ENCODE measurements at regions of chr6 and their contacts with region 1.

Region 1: GRCh38 chr6:157981395-157982296 is at the start of gene SYNJ2:
- DNase-seq: peak; percentile 72
- H3K4me3 Mint-ChIP-seq: peak within 1 kb of the TSS; percentile 72
- H3K27ac Mint-ChIP-seq: peak within 1 kb of the TSS; percentile 11
- H3K4me1 Mint-ChIP-seq: no peaks in the 10 kb centered on the region
- H3K27me3 Mint-ChIP-seq: no peaks in the 10 kb centered on the region
- CTCF ChIP-seq: peak; percentile 32
- total RNA-seq, gene SYNJ2: 8.9 and 10.3 TPM in 2 replicates

Region 2: GRCh38 chr6:157034436-157035230 is 947.0 kb before region 1 on chr6:
- CTCF ChIA-PET with region 1: no interaction called
- POLR2A ChIA-PET with region 1: no interaction called
- intact Hi-C with region 1: no loop called
- DNase-seq: peak; percentile 69
- H3K4me3 Mint-ChIP-seq: peak overlapping the region; percentile 72
- H3K27ac Mint-ChIP-seq: no peak overlapping the region
- H3K4me1 Mint-ChIP-seq: peaks cover 23% of the 10 kb centered on the region
- H3K27me3 Mint-ChIP-seq: no peaks in the 10 kb centered on the region
- CTCF ChIP-seq: peak; percentile 42

Region 3: GRCh38 chr6:158143700-158144099 is 162.1 kb after region 1 on chr6:
- CTCF ChIA-PET with region 1: no interaction called
- POLR2A ChIA-PET with region 1: no interaction called
- intact Hi-C with region 1: loop called (anchors 5 kb)
- DNase-seq: peak; percentile 43
- H3K4me3 Mint-ChIP-seq: no peak overlapping the region
- H3K27ac Mint-ChIP-seq: no peak overlapping the region
- H3K4me1 Mint-ChIP-seq: peaks cover 6% of the 10 kb centered on the region
- H3K27me3 Mint-ChIP-seq: no peaks in the 10 kb centered on the region
- CTCF ChIP-seq: peak; percentile 7

Measured in MCF 10A (cell line).